Common myeloid progenitor, CD34-positive (primary cell): ENCODE measurements at regions of chr1 and their contacts with region 1.

Region 1: GRCh38 chr1:205227584-205228006 is at the start of gene TMCC2:
- DNase-seq: peak; percentile 89 to 94 (median 93)
- H3K4me3 ChIP-seq: peak within 1 kb of the TSS; percentile 58 to 86 (median 73)
- H3K27ac ChIP-seq: no peak within 1 kb of the TSS
- H3K4me1 ChIP-seq: peaks cover 6 to 35% (median 33%) of the 10 kb centered on the region in 4 experiments
- H3K27me3 ChIP-seq: peaks cover 0 to 13% (median 0%) of the 10 kb centered on the region in 5 experiments

Region 2: DNA sequence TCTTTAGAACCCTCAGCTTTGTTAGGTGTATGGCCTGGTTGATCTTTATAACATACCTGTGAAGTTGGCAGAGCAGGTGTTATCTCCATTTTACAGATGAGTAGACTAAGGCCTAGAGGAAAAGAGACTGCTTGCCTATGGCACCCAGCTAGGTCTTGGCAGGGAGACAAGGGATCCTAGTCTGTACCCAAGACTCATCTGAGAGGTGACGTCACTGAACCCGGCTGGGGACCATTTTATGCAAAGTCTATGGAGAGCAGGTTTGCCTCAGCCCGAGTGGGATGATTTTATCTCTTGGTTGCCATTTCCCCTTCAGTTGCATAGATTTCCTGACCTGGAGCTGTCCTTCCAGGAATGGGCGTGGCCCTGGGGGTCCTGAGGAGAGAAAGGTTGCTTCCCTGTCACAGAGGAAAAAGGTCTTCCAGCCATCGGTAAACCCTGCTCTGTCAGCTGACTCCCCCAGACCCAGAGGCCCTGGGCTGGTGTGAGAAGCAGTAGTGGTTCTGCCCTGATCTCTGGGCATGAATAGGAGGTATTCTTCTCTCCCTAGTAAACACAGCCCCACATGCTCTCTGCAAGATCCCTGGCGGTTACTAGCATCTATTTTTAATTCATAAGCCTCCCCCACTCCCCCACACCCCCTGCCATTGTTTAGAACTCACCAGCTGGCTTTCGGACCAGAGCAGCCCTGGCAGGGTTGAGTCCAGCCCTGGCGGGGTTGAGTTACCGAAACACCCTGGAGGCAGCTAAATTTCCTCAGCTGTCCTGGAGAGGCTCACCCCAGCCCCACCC is 19.7 kb after region 1 on chr1:
- CTCF ChIA-PET with region 1: interaction called, 129 read pairs
- POLR2A ChIA-PET with region 1: no interaction called
- DNase-seq: peak in 2 of 3 donors; percentile 54 to 64
- H3K4me3 ChIP-seq: no peak overlapping the region
- H3K27ac ChIP-seq: no peak overlapping the region
- H3K4me1 ChIP-seq: peaks cover 6 to 38% (median 36%) of the 10 kb centered on the region in 4 experiments
- H3K27me3 ChIP-seq: no peaks in the 10 kb centered on the region

Region 3: GRCh38 chr1:205294175-205294913 is 66.7 kb after region 1 on chr1:
- CTCF ChIA-PET with region 1: no interaction called
- POLR2A ChIA-PET with region 1: no interaction called
- DNase-seq: no peak
- H3K4me3 ChIP-seq: no peak overlapping the region
- H3K27ac ChIP-seq: no peak overlapping the region
- H3K4me1 ChIP-seq: peaks cover 0 to 2% (median 0%) of the 10 kb centered on the region in 4 experiments
- H3K27me3 ChIP-seq: peaks cover 0 to 21% (median 0%) of the 10 kb centered on the region in 5 experiments